ENCODE measurements at regions of chr3 and their contacts with region 1.

Region 1: GRCh38 chr3:107740992-107741896 is 218.5 kb downstream of the BBX start:
- DNase-seq: peak; percentile 61
- ATAC-seq: peak; percentile 78
- H3K4me3 ChIP-seq: no peak overlapping the region
- H3K27ac ChIP-seq: no peak overlapping the region
- H3K4me1 ChIP-seq: no peaks in the 10 kb centered on the region
- H3K27me3 ChIP-seq: no peaks in the 10 kb centered on the region
- CTCF ChIP-seq: peak; percentile 81

Region 2: DNA sequence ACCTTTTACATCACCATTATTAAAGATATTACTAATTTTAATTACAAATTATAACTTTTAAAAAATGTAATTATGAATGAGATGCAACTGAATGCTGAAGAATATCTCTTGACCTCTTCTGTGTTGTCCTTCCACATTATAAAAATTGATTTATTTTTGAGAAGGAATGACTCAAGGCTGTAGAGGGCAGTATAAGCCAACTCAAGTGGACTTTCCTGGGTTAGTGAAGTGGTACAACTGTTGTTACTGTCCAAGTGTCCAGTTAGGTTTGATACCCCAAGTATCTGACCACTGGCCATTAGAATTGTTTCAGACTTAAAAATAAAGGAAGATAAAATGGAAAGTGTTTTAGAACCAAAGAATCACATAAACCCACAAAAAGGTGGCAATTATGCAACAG is 166.6 kb before region 1 on chr3:
- CTCF ChIA-PET with region 1: interaction called, 4 read pairs
- POLR2A ChIA-PET with region 1: no interaction called
- intact Hi-C with region 1: loop called (anchors 2 kb)
- DNase-seq: peak; percentile 62
- ATAC-seq: peak; percentile 76
- H3K4me3 ChIP-seq: no peak overlapping the region
- H3K27ac ChIP-seq: no peak overlapping the region
- H3K4me1 ChIP-seq: no peaks in the 10 kb centered on the region
- H3K27me3 ChIP-seq: no peaks in the 10 kb centered on the region
- CTCF ChIP-seq: peak; percentile 75

Region 3: GRCh38 chr3:107598926-107599771 is 142.1 kb before region 1 on chr3:
- CTCF ChIA-PET with region 1: no interaction called
- POLR2A ChIA-PET with region 1: no interaction called
- intact Hi-C with region 1: no loop called
- DNase-seq: peak; percentile 34
- ATAC-seq: peak; percentile 95
- H3K4me3 ChIP-seq: peak overlapping the region; percentile 59
- H3K27ac ChIP-seq: peak overlapping the region; percentile 0; the same call in 1 of the 2 replicates
- H3K4me1 ChIP-seq: peaks cover 15% of the 10 kb centered on the region
- H3K27me3 ChIP-seq: no peaks in the 10 kb centered on the region
- CTCF ChIP-seq: no peak

Region 4: DNA sequence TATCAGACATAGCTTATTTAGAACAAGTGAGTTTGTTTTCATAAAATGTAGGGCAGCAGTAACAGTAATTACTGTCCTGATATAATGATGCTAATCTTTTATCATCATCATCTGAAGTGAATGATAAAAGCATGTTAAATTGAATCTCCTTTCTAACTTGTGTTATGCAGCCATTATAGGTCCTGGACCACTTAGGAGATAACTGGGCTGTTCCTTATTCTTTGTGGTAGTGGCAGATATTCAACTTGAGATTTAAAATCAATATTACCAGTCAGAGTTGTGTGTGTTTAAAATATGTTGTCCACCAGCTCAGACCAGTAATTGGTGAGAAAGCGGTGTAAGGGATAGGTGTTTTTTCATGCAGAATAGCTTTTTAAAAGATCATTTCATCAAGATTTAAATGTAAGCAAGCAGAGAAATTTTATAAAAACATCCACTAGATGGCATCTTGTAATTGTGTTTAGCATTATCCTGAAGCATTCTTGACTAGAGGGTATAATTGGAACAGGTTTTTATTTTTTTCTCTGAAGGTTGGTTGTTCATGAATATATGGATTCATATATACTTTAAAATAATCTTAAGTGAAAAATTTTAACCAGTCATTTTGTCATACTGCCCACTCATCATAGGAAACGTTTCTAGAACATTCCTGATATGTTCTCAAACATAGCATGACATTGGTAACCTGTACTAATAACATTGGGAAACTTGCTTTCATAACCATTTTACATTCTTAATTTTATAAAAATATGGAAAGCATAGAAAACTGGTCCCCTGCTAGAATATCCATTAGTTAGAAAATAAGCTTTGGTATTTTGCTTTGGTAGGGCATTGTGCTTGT is 64.6 kb before region 1 on chr3:
- CTCF ChIA-PET with region 1: interaction called, 13 read pairs
- POLR2A ChIA-PET with region 1: no interaction called
- intact Hi-C with region 1: loop called (anchors 1 kb)
- DNase-seq: peak; percentile 72
- ATAC-seq: peak; percentile 68
- H3K4me3 ChIP-seq: no peak overlapping the region
- H3K27ac ChIP-seq: no peak overlapping the region
- H3K4me1 ChIP-seq: no peaks in the 10 kb centered on the region
- H3K27me3 ChIP-seq: no peaks in the 10 kb centered on the region
- CTCF ChIP-seq: peak; percentile 76

Region 5: DNA sequence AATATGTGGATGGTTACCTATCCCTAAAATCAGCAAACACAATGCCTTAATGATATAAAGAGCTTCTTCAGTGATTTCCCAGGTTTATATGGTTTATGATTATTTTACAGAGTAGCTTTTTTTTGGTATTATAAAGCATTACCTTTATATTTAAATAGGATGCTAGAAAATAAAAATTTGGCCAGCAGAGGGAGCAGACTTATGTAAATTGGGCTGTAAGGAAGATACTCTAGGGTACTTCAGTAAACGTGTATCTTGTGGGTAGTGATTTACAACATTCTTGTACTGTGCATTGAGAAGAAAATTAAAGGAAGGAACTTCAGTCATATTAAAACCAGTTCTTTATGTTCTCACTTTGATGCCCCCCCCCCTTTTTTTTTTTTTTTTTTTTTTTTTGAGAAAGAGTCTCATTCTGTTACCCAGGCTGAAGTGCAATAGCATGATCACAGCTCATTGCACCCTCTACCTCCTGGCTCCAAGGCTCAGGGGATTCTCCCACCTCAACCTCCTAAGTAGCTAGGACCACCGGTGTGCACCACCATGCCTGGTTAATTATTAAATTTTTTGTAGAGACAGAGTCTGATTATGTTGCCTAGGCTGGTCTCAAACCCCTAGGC is 50.6 kb before region 1 on chr3:
- CTCF ChIA-PET with region 1: interaction called, 37 read pairs
- POLR2A ChIA-PET with region 1: no interaction called
- intact Hi-C with region 1: loop called (anchors 1 kb)
- DNase-seq: peak; percentile 84
- ATAC-seq: peak; percentile 77
- H3K4me3 ChIP-seq: no peak overlapping the region
- H3K27ac ChIP-seq: no peak overlapping the region
- H3K4me1 ChIP-seq: no peaks in the 10 kb centered on the region
- H3K27me3 ChIP-seq: no peaks in the 10 kb centered on the region
- CTCF ChIP-seq: peak; percentile 72

Region 6: GRCh38 chr3:108022256-108023097 is 281.2 kb after region 1 on chr3:
- CTCF ChIA-PET with region 1: no interaction called
- POLR2A ChIA-PET with region 1: no interaction called
- intact Hi-C with region 1: loop called (anchors 5 kb)
- DNase-seq: no peak
- ATAC-seq: no peak
- H3K4me3 ChIP-seq: no peak overlapping the region
- H3K27ac ChIP-seq: no peak overlapping the region
- H3K4me1 ChIP-seq: peaks cover 13% of the 10 kb centered on the region
- H3K27me3 ChIP-seq: no peaks in the 10 kb centered on the region
- CTCF ChIP-seq: no peak